GM12878 (cell line): ENCODE measurements at regions of chr11 and their contacts with region 1.

Region 1: DNA sequence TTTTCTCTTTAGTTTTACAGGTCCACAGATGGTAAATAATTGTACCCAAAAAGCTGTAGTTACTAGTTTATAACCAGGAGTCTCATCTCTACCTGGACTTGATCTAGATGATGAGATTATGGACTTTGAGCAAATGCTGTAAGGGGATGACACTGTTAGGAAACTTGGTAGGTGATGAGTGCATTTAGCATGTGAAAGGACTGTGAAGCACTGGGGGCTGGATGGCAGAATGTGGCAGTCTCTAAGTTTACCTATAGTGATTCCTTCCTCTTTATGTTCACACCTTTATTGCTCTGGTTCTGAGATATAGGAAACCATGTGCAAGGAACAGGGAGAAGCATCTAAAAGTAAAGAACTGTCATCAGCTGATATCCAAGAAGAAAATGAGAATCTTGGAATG is 230.7 kb upstream of the CHORDC1 start:
- DNase-seq: no peak
- ATAC-seq: no peak
- H3K4me3 ChIP-seq: no peak overlapping the region
- H3K27ac ChIP-seq: no peak overlapping the region
- H3K4me1 ChIP-seq: no peaks in the 10 kb centered on the region
- H3K27me3 ChIP-seq: no peaks in the 10 kb centered on the region
- CTCF ChIP-seq: no peak
- EP300 ChIP-seq: no peak
- POLR2A ChIP-seq: no peak
- RAD21 ChIP-seq: no peak

Region 2: GRCh38 chr11:90250970-90251369 is 202.6 kb before region 1 on chr11:
- CTCF ChIA-PET with region 1: no interaction called
- POLR2A ChIA-PET with region 1: no interaction called
- RAD21 ChIA-PET with region 1: no interaction called
- SMC1A ChIA-PET with region 1: no interaction called
- in situ Hi-C with region 1: no loop called
- intact Hi-C with region 1: loop called (anchors 5 kb)
- DNase-seq: no peak
- ATAC-seq: peak; percentile 78
- H3K4me3 ChIP-seq: no peak overlapping the region
- H3K27ac ChIP-seq: no peak overlapping the region
- H3K4me1 ChIP-seq: no peaks in the 10 kb centered on the region
- H3K27me3 ChIP-seq: no peaks in the 10 kb centered on the region
- CTCF ChIP-seq: no peak
- EP300 ChIP-seq: no peak
- POLR2A ChIP-seq: no peak
- RAD21 ChIP-seq: no peak